ENCODE measurements at regions of chr4 and their contacts with region 1.

Region 1: GRCh38 chr4:146436423-146437162 is 85.1 kb downstream of the SLC10A7 start:
- DNase-seq: no peak
- ATAC-seq: no peak
- H3K4me3 ChIP-seq: no peak overlapping the region
- H3K4me3 Mint-ChIP-seq: no peak overlapping the region
- H3K27ac ChIP-seq: no peak overlapping the region
- H3K27ac Mint-ChIP-seq: no peak overlapping the region
- H3K4me1 ChIP-seq: no peaks in the 10 kb centered on the region
- H3K4me1 Mint-ChIP-seq: no peaks in the 10 kb centered on the region
- H3K27me3 ChIP-seq: no peaks in the 10 kb centered on the region
- H3K27me3 Mint-ChIP-seq: no peaks in the 10 kb centered on the region
- CTCF ChIP-seq: no peak

Region 2: GRCh38 chr4:146382194-146382593 is 54.4 kb before region 1 on chr4:
- CTCF ChIA-PET with region 1: no interaction called
- POLR2A ChIA-PET with region 1: no interaction called
- intact Hi-C with region 1: no loop called
- DNase-seq: no peak
- ATAC-seq: no peak
- H3K4me3 ChIP-seq: no peak overlapping the region
- H3K4me3 Mint-ChIP-seq: no peak overlapping the region
- H3K27ac ChIP-seq: no peak overlapping the region
- H3K27ac Mint-ChIP-seq: no peak overlapping the region
- H3K4me1 ChIP-seq: no peaks in the 10 kb centered on the region
- H3K4me1 Mint-ChIP-seq: no peaks in the 10 kb centered on the region
- H3K27me3 ChIP-seq: no peaks in the 10 kb centered on the region
- H3K27me3 Mint-ChIP-seq: no peaks in the 10 kb centered on the region
- CTCF ChIP-seq: no peak

Region 3: GRCh38 chr4:146477054-146477453 is 40.5 kb after region 1 on chr4:
- CTCF ChIA-PET with region 1: no interaction called
- POLR2A ChIA-PET with region 1: no interaction called
- intact Hi-C with region 1: loop called in 1 of 2 experiments (anchors 5 kb)
- DNase-seq: no peak
- ATAC-seq: no peak
- H3K4me3 ChIP-seq: no peak overlapping the region
- H3K4me3 Mint-ChIP-seq: no peak overlapping the region
- H3K27ac ChIP-seq: no peak overlapping the region
- H3K27ac Mint-ChIP-seq: no peak overlapping the region
- H3K4me1 ChIP-seq: no peaks in the 10 kb centered on the region
- H3K4me1 Mint-ChIP-seq: peaks cover 4% of the 10 kb centered on the region
- H3K27me3 ChIP-seq: no peaks in the 10 kb centered on the region
- H3K27me3 Mint-ChIP-seq: no peaks in the 10 kb centered on the region
- CTCF ChIP-seq: no peak

Measured in CD8-positive, alpha-beta T cell (primary cell).